ENCODE measurements at regions of chr16 and their contacts with region 1.

Region 1: DNA sequence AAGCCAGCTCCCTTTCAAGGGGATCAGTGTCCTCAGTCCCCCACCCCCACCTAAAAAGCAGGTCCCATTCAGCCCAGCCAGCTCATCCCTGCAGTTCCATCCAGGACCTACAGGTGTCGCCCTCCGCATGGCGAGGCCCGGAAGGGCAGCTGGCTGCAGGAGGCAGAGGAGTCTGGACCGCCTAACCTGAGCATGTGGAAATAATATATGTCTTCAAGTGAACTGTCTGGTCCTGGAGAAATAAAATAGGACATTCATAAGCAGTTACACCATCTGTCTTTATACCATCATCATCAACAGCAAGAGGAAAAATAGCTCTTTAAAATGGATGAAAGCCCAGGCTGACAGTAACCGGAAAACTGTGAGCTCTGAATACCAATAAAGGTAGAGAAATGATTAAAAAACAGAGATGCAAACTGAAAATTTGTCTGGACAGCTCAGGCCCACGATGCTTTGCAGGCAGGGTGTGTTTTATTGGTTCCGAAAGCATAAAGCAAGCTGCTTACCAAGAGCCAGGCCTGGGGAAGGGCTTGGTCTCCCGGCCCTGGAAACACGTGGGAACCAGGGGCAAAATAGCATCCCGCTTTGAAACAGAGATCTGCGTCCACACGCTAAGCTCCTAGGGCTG is 215.2 kb downstream of the ZFHX3 start:
- DNase-seq: peak; percentile 63 to 87 (median 74)
- H3K4me3 ChIP-seq: no peak overlapping the region
- H3K27ac ChIP-seq: peak overlapping the region in 12 of 59 donors; percentile 3 to 61 (median 26)
- H3K27me3 ChIP-seq: no peaks in the 10 kb centered on the region
- CTCF ChIP-seq: peak; percentile 74 to 98 (median 93)

Region 2: GRCh38 chr16:73196670-73197069 is 363.9 kb after region 1 on chr16:
- intact Hi-C with region 1: loop called (anchors 5 to 10 kb)
- DNase-seq: peak in 5 of 10 donors; percentile 7 to 65 (median 56)
- H3K4me3 ChIP-seq: no peak overlapping the region
- H3K27ac ChIP-seq: no peak overlapping the region
- H3K27me3 ChIP-seq: peaks cover 0 to 23% (median 0%) of the 10 kb centered on the region in 45 donors
- CTCF ChIP-seq: peak; percentile 27 to 76 (median 63)